PC-9 (cell line): ENCODE measurements at regions of chr4 and their contacts with region 1.

Region 1: DNA sequence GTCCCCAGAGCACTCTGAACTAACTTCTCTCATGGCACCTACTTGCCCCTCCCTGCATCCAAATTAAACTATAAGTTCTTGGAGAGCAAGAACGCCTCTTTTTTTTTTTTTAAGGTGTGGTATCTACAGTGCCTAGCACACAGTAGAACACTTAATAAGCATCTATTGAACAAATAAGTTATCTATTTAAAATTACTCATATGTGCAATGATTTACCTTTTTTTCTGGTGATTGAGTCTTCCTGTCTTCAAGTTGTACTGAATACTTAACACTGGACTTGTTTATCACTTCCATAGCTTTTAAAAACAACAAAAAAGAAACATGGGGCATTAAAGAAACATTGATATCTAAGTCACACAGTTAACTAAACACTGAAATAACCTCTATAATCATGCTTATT is 29.1 kb downstream of the HAUS3 start:
- DNase-seq: no peak
- H3K4me3 ChIP-seq: no peak overlapping the region
- H3K27ac ChIP-seq: no peak overlapping the region
- H3K4me1 ChIP-seq: no peaks in the 10 kb centered on the region
- H3K27me3 ChIP-seq: peaks cover 5% of the 10 kb centered on the region; the same call in 1 of the 2 replicates
- CTCF ChIP-seq: no peak

Region 2: DNA sequence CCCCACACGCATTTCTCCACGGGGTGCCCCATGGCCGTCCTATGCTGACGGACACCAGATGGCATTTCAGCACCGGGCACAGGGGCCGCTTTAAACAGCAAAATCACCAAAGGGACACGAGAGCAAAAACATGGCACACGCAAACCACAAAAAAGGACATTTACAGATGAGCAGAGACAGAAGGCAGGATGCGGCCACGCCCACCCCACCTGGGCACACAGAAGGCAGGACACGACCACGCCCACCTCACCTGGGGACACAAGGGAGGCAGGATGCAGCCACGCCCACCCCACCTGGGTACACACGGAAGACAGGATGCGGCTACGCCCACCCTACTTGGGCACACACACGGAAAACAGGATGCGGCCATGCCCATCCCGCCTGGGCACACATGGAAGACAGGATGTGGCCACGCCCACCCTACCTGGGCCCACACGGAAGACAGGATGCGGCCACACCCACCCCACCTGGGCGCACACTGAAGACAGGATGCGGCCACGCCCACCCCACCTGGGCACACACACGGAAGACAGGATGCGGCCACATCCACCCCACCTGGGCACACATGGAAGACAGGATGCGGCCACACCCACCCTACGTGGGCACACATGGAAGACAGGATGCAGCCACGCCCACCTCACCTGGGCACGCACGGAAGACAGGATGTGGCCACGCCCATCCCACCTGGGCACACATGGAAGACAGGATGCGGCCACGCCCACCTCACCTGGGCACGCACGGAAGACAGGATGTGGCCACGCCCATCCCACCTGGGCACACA is 597.8 kb before region 1 on chr4:
- CTCF ChIA-PET with region 1: no interaction called
- POLR2A ChIA-PET with region 1: no interaction called
- intact Hi-C with region 1: no loop called
- DNase-seq: no peak
- H3K4me3 ChIP-seq: no peak overlapping the region
- H3K27ac ChIP-seq: no peak overlapping the region
- H3K4me1 ChIP-seq: no peaks in the 10 kb centered on the region
- H3K27me3 ChIP-seq: peaks cover 37% of the 10 kb centered on the region
- CTCF ChIP-seq: no peak

Region 3: DNA sequence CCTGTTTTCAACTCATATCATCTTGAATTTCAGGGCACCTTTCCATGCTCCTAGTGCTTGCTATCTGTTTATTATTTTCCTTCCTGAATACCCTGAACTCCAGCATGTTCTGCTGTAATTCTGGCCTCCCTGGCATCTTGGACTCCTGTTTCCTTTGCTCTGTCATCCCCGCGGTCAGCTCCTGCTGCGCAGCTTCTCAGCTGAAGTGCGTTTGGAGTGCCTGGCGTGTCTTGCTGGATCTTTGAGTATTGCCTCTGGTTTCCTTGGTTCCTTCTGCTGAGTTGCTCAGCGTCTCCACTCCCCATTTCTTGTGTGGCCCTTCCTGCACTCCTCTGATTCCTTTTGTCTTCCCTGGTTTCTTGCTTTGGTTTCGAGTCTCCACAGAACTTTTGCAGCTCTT is 946.0 kb after region 1 on chr4:
- CTCF ChIA-PET with region 1: interaction called, 16 read pairs
- POLR2A ChIA-PET with region 1: no interaction called
- intact Hi-C with region 1: no loop called
- DNase-seq: no peak
- H3K4me3 ChIP-seq: no peak overlapping the region
- H3K27ac ChIP-seq: no peak overlapping the region
- H3K4me1 ChIP-seq: no peaks in the 10 kb centered on the region
- H3K27me3 ChIP-seq: no peaks in the 10 kb centered on the region
- CTCF ChIP-seq: no peak